Ovary (tissue), 10 donors: ENCODE measurements at regions of chr7 and their contacts with region 1.

Region 1: DNA sequence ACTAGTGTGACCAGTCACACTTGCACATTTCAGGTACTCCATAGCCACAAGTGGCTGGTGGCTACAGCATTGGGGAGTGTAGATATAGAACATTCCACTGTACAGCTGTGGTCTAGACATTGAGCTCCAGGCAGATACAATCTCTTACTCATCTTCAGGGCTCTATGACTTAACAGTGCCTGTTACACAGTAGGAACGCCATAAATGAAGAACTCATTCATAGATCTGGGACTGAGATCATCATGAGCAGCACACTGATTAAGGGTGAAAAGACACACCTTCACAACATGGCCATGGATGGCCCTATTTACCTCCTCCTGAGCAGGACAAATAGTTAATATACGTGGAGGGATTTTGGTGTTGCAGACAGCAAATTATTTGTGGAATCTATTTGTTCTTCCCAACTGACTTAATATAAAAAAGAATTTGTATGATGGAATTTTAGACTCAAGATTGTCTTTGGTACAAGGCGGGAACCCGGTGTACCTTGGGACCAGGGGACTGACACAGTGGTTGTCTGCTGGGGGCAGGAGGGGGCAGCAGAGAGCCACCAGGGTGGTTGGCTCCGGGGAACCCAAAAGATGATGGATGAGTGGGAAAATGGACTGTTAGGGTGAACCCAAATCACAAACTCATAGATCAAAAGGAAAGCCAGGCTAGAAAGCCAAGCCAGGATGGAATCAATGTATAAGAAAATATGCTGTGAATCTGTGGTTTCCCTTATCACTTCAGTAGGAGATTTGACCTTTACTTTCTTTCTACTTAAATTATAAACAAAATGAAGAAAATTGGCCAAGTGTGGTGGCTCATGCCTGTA is 24.3 kb upstream of the CPA2 start:
- DNase-seq: peak in 4 of 5 donors; percentile 27 to 48 (median 36)
- H3K4me3 ChIP-seq: no peak overlapping the region
- H3K27ac ChIP-seq: no peak overlapping the region
- H3K4me1 ChIP-seq: no peaks in the 10 kb centered on the region
- H3K27me3 ChIP-seq: no peaks in the 10 kb centered on the region
- CTCF ChIP-seq: peak in 1 of 3 donors; percentile 20
- EP300 ChIP-seq: no peak
- POLR2A ChIP-seq: no peak

Region 2: GRCh38 chr7:128335734-128336133 is 1906.7 kb before region 1 on chr7:
- intact Hi-C with region 1: loop called in 1 of 4 experiments (anchors 5 kb)
- DNase-seq: no peak
- H3K4me3 ChIP-seq: no peak overlapping the region
- H3K27ac ChIP-seq: no peak overlapping the region
- H3K4me1 ChIP-seq: no peaks in the 10 kb centered on the region
- H3K27me3 ChIP-seq: no peaks in the 10 kb centered on the region
- CTCF ChIP-seq: no peak
- EP300 ChIP-seq: no peak
- POLR2A ChIP-seq: no peak

Region 3: DNA sequence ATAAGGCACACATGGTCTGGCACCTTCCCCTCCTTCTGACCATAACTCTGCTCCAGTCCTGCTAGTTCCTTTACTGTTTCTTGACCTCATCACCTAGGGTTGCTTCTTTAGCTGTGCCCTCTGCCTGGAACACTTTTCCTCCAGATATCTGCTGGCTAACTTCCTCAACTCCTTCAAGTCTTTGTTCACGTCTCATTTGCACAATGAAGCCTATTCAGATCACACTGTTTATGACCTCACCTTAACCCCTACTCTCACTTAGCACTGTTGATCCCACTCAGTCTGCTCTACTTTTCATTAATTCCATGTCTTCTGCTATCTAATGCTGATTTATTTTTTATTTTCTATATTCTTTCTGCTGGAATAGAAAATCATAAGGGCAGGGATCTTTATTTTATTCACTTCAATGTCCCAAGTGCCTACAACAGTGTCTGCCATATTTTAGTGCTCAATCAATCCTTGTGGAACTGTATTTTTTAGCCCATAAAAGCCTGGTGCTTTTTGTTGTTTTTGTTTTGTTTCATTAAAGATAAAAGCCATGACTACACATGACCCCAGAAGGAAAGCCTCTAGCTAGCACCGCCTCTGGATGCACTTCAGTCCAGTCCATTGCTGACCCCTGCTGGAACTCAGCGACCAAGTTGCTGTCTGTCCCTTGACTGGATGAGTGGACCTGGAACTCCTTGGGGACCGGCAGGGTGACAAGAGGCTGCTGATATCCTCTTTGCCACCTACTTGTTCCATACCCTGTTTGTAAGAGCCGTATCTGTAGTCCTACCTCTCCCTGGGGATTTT is 479.3 kb after region 1 on chr7:
- intact Hi-C with region 1: no loop called
- DNase-seq: peak; percentile 60 to 79 (median 78)
- H3K4me3 ChIP-seq: no peak overlapping the region
- H3K27ac ChIP-seq: no peak overlapping the region
- H3K4me1 ChIP-seq: peaks cover 2% of the 10 kb centered on the region
- H3K27me3 ChIP-seq: no peaks in the 10 kb centered on the region
- CTCF ChIP-seq: peak; percentile 44 to 58 (median 50)
- EP300 ChIP-seq: no peak
- POLR2A ChIP-seq: no peak